Activated T-helper 2 cell treated with anti-CD3 and anti-CD28 coated beads, Interferon-gamma antibody, Interleukin-2, Interleukin-4, amounts not matched to agents 10 μg/mL and 5 μg/mL and 100 μg/mL, durations not matched to agents 14 hours and 24 hours and 36 hours (primary cell): ENCODE measurements at regions of chr11 and their contacts with region 1.

Region 1: GRCh38 chr11:68282141-68282970 is 10.6 kb upstream of the C11orf24 start:
- DNase-seq: peak; percentile 52
- H3K4me3 Mint-ChIP-seq: peak overlapping the region; percentile 45
- H3K27ac Mint-ChIP-seq: peak overlapping the region; percentile 18
- H3K4me1 Mint-ChIP-seq: peaks cover 26% of the 10 kb centered on the region
- H3K27me3 Mint-ChIP-seq: peaks cover 7% of the 10 kb centered on the region

Region 2: GRCh38 chr11:68271781-68272608 is 10.4 kb before region 1 on chr11 and contains the start of gene C11orf24:
- intact Hi-C with region 1: loop called (anchors 1 kb)
- DNase-seq: peak; percentile 93
- H3K4me3 Mint-ChIP-seq: peak within 1 kb of the TSS; percentile 97
- H3K27ac Mint-ChIP-seq: peak within 1 kb of the TSS; percentile 89
- H3K4me1 Mint-ChIP-seq: peaks cover 26% of the 10 kb centered on the region
- H3K27me3 Mint-ChIP-seq: no peaks in the 10 kb centered on the region
- total RNA-seq, gene C11orf24: 32.7 and 34.2 TPM in 2 replicates

Region 3: DNA sequence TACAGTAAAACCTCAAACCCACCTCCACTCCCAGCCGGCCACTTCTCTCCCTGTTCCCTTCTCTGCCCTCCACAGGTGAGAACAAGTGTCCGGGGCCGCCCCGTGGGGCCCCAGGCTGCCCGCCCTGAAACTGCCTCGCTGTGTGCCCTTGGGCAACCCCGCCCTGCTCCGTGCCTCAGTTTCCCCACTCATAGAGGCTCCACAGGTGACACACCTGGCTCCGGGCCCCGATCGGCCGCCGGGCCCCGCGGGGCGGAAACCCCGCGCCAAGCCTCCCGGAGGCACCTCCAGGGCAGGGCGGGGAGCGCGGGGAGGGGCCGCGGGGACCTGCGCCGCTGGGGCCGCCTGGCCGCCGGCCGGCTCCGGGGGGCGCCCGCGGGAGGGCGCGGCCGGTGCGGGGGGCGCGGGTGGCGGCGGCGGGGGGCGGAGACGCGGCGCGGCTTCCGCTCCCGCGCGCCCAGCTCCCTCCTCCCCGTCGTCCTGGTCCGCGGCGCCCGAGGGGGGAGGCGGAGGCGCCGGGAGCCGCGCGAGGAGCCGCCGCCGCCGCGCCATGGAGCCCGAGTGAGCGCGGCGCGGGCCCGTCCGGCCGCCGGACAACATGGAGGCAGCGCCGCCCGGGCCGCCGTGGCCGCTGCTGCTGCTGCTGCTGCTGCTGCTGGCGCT is 29.9 kb after region 1 on chr11 and contains the start of gene LRP5:
- intact Hi-C with region 1: no loop called
- DNase-seq: no peak
- H3K4me3 Mint-ChIP-seq: peak within 1 kb of the TSS; percentile 84
- H3K27ac Mint-ChIP-seq: no peak within 1 kb of the TSS
- H3K4me1 Mint-ChIP-seq: peaks cover 25% of the 10 kb centered on the region
- H3K27me3 Mint-ChIP-seq: peaks cover 26% of the 10 kb centered on the region
- total RNA-seq, gene LRP5: 9.4 and 11.1 TPM in 2 replicates

Region 4: DNA sequence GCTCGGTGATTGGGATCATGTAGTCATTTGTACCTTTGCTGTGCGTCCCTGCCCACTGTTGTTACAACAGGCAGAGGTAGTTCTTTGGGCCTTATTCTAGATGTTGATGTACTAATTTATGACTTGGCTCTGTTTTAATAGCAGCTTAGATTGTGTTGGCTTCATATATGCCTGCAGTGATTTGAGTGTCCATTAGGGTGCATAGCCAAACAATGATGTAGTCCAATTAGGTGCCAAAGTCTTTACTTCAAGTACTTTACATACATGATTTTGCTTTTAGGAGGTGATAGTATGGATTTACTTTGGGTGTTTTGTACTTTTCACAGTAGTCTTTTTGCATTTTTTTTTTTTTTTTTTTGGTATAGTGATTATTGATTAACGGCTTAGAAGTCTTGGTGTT is 224.6 kb after region 1 on chr11:
- intact Hi-C with region 1: no loop called
- DNase-seq: no peak
- H3K4me3 Mint-ChIP-seq: no peak overlapping the region
- H3K27ac Mint-ChIP-seq: no peak overlapping the region
- H3K4me1 Mint-ChIP-seq: peaks cover 30% of the 10 kb centered on the region
- H3K27me3 Mint-ChIP-seq: no peaks in the 10 kb centered on the region